ENCODE measurements at regions of chr19 and their contacts with region 1.

Region 1: GRCh38 chr19:8240274-8241229 is 31.4 kb downstream of the CERS4 start:
- DNase-seq: peak; percentile 92 to 98 (median 96)
- ATAC-seq: peak; percentile 67 to 88 (median 78)
- H3K4me3 ChIP-seq: peak overlapping the region in 1 of 4 donors; percentile 22
- H3K27ac ChIP-seq: peak overlapping the region; percentile 71 to 94 (median 85)
- H3K4me1 ChIP-seq: peaks cover 0 to 38% (median 31%) of the 10 kb centered on the region in 3 donors
- H3K27me3 ChIP-seq: no peaks in the 10 kb centered on the region
- CTCF ChIP-seq: no peak

Region 2: GRCh38 chr19:8174706-8175105 is 65.8 kb before region 1 on chr19:
- intact Hi-C with region 1: loop called in 1 of 3 experiments (anchors 10 kb)
- DNase-seq: no peak
- ATAC-seq: no peak
- H3K4me3 ChIP-seq: no peak overlapping the region
- H3K27ac ChIP-seq: no peak overlapping the region
- H3K4me1 ChIP-seq: no peaks in the 10 kb centered on the region
- H3K27me3 ChIP-seq: no peaks in the 10 kb centered on the region
- CTCF ChIP-seq: no peak

Region 3: GRCh38 chr19:8185343-8186068 is 55.0 kb before region 1 on chr19:
- intact Hi-C with region 1: no loop called
- DNase-seq: no peak
- ATAC-seq: no peak
- H3K4me3 ChIP-seq: no peak overlapping the region
- H3K27ac ChIP-seq: no peak overlapping the region
- H3K4me1 ChIP-seq: peaks cover 0 to 6% (median 0%) of the 10 kb centered on the region in 3 donors
- H3K27me3 ChIP-seq: no peaks in the 10 kb centered on the region
- CTCF ChIP-seq: no peak

Measured in pancreas (tissue), 10 donors.